ENCODE measurements at regions of chr5 and their contacts with region 1.

Region 1: DNA sequence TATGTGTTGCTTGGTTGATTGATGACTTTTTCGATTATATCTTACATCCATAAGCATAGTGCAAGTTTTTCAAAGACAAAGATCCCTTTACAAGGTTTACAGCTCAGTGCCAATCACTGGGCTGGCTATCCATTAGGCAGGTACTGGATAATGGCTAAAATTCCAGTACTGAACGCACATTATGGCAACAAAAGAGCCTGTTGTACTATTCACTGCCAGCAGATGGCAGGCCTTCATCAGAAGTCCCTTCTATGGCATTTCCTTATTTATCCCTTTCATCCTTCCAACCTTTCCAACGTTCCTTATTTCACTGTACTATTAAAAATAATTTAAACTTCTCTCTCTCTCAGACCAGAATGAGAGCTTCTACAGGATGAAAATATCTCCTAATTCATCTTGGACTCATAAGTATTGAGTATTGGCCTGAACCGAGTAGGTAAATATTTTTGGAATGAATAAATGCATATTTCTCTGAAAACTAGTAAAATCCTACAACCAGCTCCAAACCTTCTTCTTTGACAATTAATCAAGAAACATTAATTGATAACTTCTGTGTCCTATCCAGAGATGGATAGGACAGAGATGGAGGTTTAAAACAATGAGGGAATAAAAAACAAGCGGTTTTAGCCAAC is 6.7 kb upstream of the WNT8A start:
- DNase-seq: peak; percentile 23
- H3K4me3 ChIP-seq: no peak overlapping the region
- H3K27ac ChIP-seq: no peak overlapping the region
- H3K27me3 ChIP-seq: peaks cover 4% of the 10 kb centered on the region
- CTCF ChIP-seq: peak; percentile 93

Region 2: GRCh38 chr5:138035605-138036537 is 41.3 kb before region 1 on chr5:
- CTCF ChIA-PET with region 1: interaction called, 48 read pairs
- POLR2A ChIA-PET with region 1: no interaction called
- DNase-seq: peak; percentile 68
- H3K4me3 ChIP-seq: no peak overlapping the region
- H3K27ac ChIP-seq: no peak overlapping the region
- H3K27me3 ChIP-seq: no peaks in the 10 kb centered on the region
- CTCF ChIP-seq: peak; percentile 87

Region 3: GRCh38 chr5:138093036-138093435 is 15.9 kb after region 1 on chr5:
- CTCF ChIA-PET with region 1: interaction called, 62 read pairs
- POLR2A ChIA-PET with region 1: no interaction called
- DNase-seq: no peak
- H3K4me3 ChIP-seq: no peak overlapping the region
- H3K27ac ChIP-seq: no peak overlapping the region
- H3K27me3 ChIP-seq: peaks cover 24% of the 10 kb centered on the region
- CTCF ChIP-seq: no peak

Region 4: GRCh38 chr5:138110266-138110963 is 33.2 kb after region 1 on chr5:
- CTCF ChIA-PET with region 1: interaction called, 38 read pairs
- POLR2A ChIA-PET with region 1: no interaction called
- DNase-seq: no peak
- H3K4me3 ChIP-seq: no peak overlapping the region
- H3K27ac ChIP-seq: no peak overlapping the region
- H3K27me3 ChIP-seq: peaks cover 12% of the 10 kb centered on the region
- CTCF ChIP-seq: no peak

Region 5: GRCh38 chr5:138163721-138164120 is 86.5 kb after region 1 on chr5:
- CTCF ChIA-PET with region 1: interaction called, 10 read pairs
- POLR2A ChIA-PET with region 1: no interaction called
- DNase-seq: no peak
- H3K4me3 ChIP-seq: no peak overlapping the region
- H3K27ac ChIP-seq: no peak overlapping the region
- H3K27me3 ChIP-seq: no peaks in the 10 kb centered on the region
- CTCF ChIP-seq: no peak

Measured in AG04450 (cell line).